ENCODE measurements at regions of chr3 and their contacts with region 1.

Region 1: DNA sequence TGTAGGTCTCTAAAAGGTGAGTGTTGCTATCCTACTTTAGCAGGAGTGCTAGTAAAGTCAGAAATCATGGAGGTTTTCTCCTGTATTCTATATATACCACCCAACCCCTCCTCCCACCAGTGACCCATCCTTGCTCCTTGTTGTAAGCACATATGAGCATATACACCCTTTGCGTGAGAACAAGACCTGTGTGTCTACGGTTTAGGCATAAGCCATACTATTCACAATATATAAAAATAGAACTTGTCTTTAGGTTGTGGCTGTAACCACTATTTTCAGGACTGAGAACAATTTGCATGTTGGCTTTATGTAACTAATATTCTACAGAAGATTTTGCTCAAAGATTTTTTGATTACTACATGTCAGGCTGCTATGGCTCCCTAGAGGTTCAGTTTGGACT is 59.1 kb upstream of the TOP2B start:
- DNase-seq: no peak
- ATAC-seq: no peak
- H3K4me3 ChIP-seq: no peak overlapping the region
- H3K27ac ChIP-seq: no peak overlapping the region
- H3K4me1 ChIP-seq: no peaks in the 10 kb centered on the region
- H3K27me3 ChIP-seq: no peaks in the 10 kb centered on the region
- CTCF ChIP-seq: no peak

Region 2: DNA sequence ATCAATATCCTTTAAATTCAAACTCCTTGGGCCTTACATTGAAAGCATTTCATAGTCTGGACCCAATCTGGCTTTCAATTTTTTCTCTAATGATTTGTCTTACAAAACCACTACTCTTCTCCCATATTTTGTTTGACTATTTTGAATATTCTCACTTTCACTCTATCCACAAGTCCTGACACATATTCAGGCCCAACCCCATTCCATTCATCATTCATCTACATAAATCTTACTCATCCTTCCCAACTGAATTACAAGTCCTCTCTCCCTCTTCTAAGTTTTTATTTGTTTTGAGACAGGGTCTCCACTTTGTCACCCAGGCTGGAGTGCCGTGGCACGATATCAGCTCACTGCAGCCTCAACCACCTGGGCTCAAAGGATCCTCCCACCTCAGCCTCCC is 102.7 kb before region 1 on chr3:
- intact Hi-C with region 1: loop called in 1 of 2 experiments (anchors 5 kb)
- DNase-seq: no peak
- ATAC-seq: no peak
- H3K4me3 ChIP-seq: no peak overlapping the region
- H3K27ac ChIP-seq: no peak overlapping the region
- H3K4me1 ChIP-seq: no peaks in the 10 kb centered on the region
- H3K27me3 ChIP-seq: no peaks in the 10 kb centered on the region
- CTCF ChIP-seq: no peak

Region 3: DNA sequence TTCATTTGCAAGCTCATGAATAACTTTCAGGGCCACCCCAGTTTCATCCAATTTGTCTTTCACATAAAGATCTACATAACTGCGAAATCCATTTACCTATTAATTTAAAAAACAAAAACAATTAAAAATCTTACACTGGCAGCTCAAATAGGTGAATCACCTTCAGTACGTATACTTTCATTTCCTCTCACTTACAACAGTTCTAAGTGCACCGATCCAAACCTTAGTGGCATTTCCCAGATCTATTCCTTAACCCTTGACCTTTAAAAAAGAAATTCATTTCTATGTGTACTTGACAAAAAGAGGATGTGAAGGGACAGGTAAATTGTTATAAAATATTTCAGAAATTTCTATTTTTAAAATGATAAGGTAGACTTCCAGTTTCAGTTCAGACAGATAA is 89.9 kb before region 1 on chr3:
- intact Hi-C with region 1: loop called (anchors 5 to 10 kb)
- DNase-seq: no peak
- ATAC-seq: no peak
- H3K4me3 ChIP-seq: no peak overlapping the region
- H3K27ac ChIP-seq: no peak overlapping the region
- H3K4me1 ChIP-seq: no peaks in the 10 kb centered on the region
- H3K27me3 ChIP-seq: no peaks in the 10 kb centered on the region
- CTCF ChIP-seq: no peak

Region 4: GRCh38 chr3:25674670-25675069 is 49.1 kb before region 1 on chr3:
- intact Hi-C with region 1: no loop called
- DNase-seq: no peak
- ATAC-seq: no peak
- H3K4me3 ChIP-seq: no peak overlapping the region
- H3K27ac ChIP-seq: no peak overlapping the region
- H3K4me1 ChIP-seq: no peaks in the 10 kb centered on the region
- H3K27me3 ChIP-seq: no peaks in the 10 kb centered on the region
- CTCF ChIP-seq: no peak

Region 5: GRCh38 chr3:25789596-25790556 is 66.1 kb after region 1 on chr3 and contains the start of gene OXSM:
- intact Hi-C with region 1: no loop called
- DNase-seq: peak; percentile 92 to 94
- ATAC-seq: peak; percentile 99
- H3K4me3 ChIP-seq: peak within 1 kb of the TSS; percentile 81
- H3K27ac ChIP-seq: peak within 1 kb of the TSS; percentile 96
- H3K4me1 ChIP-seq: peaks cover 24% of the 10 kb centered on the region
- H3K27me3 ChIP-seq: no peaks in the 10 kb centered on the region
- CTCF ChIP-seq: no peak
- total RNA-seq, gene OXSM: 11.1 to 13.3 (median 11.6) TPM